Activated naive CD4-positive, alpha-beta T cell treated with anti-CD3 and anti-CD28 coated beads for 36 hours (primary cell): ENCODE measurements at regions of chr2 and their contacts with region 1.

Region 1: GRCh38 chr2:174326161-174327020 is 8.4 kb upstream of the SP9 start:
- DNase-seq: peak; percentile 39
- H3K4me3 Mint-ChIP-seq: peak overlapping the region; percentile 70
- H3K27ac Mint-ChIP-seq: no peak overlapping the region
- H3K4me1 Mint-ChIP-seq: peaks cover 25% of the 10 kb centered on the region
- H3K27me3 Mint-ChIP-seq: peaks cover 74% of the 10 kb centered on the region

Region 2: DNA sequence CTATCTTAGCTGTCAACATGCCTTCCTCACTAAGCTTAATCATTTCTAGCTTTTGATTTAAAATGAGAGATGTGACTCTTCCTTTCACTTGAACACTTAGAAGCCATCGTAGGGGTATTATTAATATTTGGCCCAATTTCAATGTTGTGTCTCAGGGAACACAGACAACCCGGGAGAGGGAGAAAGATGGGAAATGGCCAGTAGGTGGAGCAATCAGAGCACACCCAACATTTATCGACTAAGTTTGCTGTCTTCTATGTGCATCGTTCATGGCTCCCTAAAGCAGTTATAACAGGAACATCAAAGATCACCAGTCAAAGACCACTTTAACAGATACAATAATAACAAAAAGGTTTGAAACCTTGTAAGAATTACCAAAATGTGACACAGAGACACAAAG is 188.2 kb before region 1 on chr2:
- CTCF ChIA-PET with region 1: no interaction called
- intact Hi-C with region 1: loop called (anchors 5 kb)
- DNase-seq: no peak
- H3K4me3 Mint-ChIP-seq: no peak overlapping the region
- H3K27ac Mint-ChIP-seq: no peak overlapping the region
- H3K4me1 Mint-ChIP-seq: no peaks in the 10 kb centered on the region
- H3K27me3 Mint-ChIP-seq: no peaks in the 10 kb centered on the region

Region 3: GRCh38 chr2:174350593-174351181 is 24.3 kb after region 1 on chr2:
- CTCF ChIA-PET with region 1: no interaction called
- intact Hi-C with region 1: no loop called
- DNase-seq: no peak
- H3K4me3 Mint-ChIP-seq: no peak overlapping the region
- H3K27ac Mint-ChIP-seq: no peak overlapping the region
- H3K4me1 Mint-ChIP-seq: no peaks in the 10 kb centered on the region
- H3K27me3 Mint-ChIP-seq: peaks cover 2% of the 10 kb centered on the region

Region 4: GRCh38 chr2:174428214-174428613 is 101.8 kb after region 1 on chr2:
- CTCF ChIA-PET with region 1: no interaction called
- intact Hi-C with region 1: no loop called
- DNase-seq: no peak
- H3K4me3 Mint-ChIP-seq: no peak overlapping the region
- H3K27ac Mint-ChIP-seq: no peak overlapping the region
- H3K4me1 Mint-ChIP-seq: no peaks in the 10 kb centered on the region
- H3K27me3 Mint-ChIP-seq: no peaks in the 10 kb centered on the region